GM10248 (cell line): ENCODE measurements at regions of chr16 and their contacts with region 1.

Region 1: GRCh38 chr16:83813823-83814658 is 6.3 kb downstream of the HSBP1 start:
- DNase-seq: no peak
- CTCF ChIP-seq: no peak

Region 2: DNA sequence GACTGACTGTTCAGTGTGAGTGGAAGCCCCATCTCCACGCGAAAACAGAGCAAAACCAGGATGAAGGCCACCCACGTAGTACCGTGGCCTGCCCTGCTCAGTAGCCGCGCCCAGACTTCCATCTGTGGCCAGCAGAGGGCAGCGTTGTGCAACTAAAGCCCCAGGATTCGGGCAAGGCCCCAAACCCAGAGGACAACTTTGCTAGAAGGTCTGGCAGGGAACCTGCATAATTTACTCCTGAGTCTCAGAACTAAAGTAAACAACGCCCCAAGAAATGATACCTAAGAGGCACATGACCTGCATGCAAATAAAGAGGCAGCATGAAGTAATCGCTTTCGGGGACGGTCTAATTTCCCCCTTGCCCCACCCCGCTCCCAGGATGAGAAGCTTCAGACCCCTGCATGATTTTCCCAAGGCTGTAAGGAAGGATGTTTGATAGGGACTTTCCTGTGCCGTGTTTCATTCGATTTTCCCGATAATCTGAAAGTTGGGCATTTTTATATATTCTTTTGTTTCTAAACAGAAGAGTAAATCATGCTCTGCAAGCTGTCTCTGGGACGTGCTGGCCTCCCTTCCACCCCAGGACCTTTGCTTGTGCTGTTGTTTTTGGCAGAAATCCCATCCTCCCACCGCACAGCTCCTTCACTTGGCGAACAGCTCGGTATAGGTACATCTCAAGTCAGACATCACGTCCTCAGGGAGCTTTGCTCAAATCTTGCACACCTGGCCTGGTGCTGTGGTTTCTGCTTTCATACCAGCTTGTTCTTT is 12.3 kb after region 1 on chr16:
- CTCF ChIA-PET with region 1: interaction called, 34 read pairs
- POLR2A ChIA-PET with region 1: no interaction called
- DNase-seq: peak; percentile 86
- CTCF ChIP-seq: peak; percentile 89